HCT116 (cell line): ENCODE measurements at regions of chr3 and their contacts with region 1.

Region 1: GRCh38 chr3:168620826-168621225 is 525.1 kb upstream of the GOLIM4 start:
- DNase-seq: peak; percentile 27
- ATAC-seq: peak; percentile 95
- H3K4me3 ChIP-seq: no peak overlapping the region
- H3K27ac ChIP-seq: no peak overlapping the region
- H3K4me1 ChIP-seq: no peaks in the 10 kb centered on the region
- H3K27me3 ChIP-seq: peaks cover 24% of the 10 kb centered on the region
- CTCF ChIP-seq: peak; percentile 57 to 67 (median 66); a peak in 5 of 6 replicates
- POLR2A ChIP-seq: no peak
- RAD21 ChIP-seq: peak; percentile 66

Region 2: DNA sequence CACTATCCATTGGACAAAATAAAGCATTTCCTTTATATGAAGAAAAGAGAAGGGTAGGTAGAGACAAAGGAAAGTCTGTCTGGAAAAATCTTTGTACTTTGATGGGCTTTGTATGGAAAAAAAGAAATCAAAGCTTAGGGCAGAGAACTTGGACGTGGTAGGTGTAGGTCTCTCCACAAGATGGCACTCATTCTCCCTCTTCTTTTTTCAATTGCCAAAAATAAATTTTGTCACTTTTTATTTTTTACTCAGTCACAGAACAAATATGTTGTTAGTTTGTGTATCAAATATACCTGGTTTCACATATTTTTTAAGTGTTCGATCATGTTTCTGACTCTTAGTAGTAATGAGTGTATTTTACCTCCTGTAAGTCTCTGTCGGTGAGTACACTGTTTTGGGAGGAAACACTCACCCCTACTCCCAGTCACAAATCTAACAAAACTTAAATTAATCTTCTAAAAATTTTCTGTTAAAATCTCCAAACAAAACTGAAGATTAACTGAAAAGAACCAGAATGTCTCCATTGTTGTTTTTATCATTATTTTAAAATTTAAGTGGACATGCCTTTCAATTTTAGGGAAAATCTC is 109.3 kb before region 1 on chr3:
- CTCF ChIA-PET with region 1: interaction called, 8 read pairs
- POLR2A ChIA-PET with region 1: no interaction called
- RAD21 ChIA-PET with region 1: no interaction called
- intact Hi-C with region 1: loop called (anchors 1 kb)
- DNase-seq: no peak
- ATAC-seq: peak; percentile 60; the same call in 1 of the 2 replicates
- H3K4me3 ChIP-seq: no peak overlapping the region
- H3K27ac ChIP-seq: no peak overlapping the region
- H3K4me1 ChIP-seq: no peaks in the 10 kb centered on the region
- H3K27me3 ChIP-seq: peaks cover 4% of the 10 kb centered on the region
- CTCF ChIP-seq: peak; percentile 32 to 59 (median 57); a peak in 5 of 6 replicates
- POLR2A ChIP-seq: no peak
- RAD21 ChIP-seq: peak; percentile 53

Region 3: GRCh38 chr3:168926426-168926825 is 305.6 kb after region 1 on chr3:
- CTCF ChIA-PET with region 1: no interaction called
- POLR2A ChIA-PET with region 1: no interaction called
- RAD21 ChIA-PET with region 1: no interaction called
- intact Hi-C with region 1: no loop called
- DNase-seq: no peak
- ATAC-seq: no peak
- H3K4me3 ChIP-seq: no peak overlapping the region
- H3K27ac ChIP-seq: no peak overlapping the region
- H3K4me1 ChIP-seq: no peaks in the 10 kb centered on the region
- H3K27me3 ChIP-seq: no peaks in the 10 kb centered on the region
- CTCF ChIP-seq: no peak
- POLR2A ChIP-seq: no peak
- RAD21 ChIP-seq: no peak